ENCODE measurements at regions of chr20 and their contacts with region 1.

Region 1: DNA sequence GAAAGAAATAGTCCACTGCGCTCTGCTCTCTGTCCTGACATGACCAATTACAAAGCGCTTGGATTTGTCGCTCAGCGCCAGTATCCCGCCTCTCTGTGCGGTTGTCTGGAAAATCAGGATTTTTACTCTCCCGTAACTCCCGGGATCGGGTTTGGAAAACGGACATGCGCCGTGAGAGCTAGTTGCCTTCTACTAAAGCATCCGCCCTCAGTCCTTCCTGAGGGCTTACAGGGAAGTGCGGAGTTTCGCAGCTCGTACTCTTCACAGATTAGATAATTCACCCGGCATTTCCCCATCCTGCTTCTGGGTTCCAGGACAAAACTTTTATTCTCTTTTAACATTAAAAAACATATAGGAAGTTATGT is 427 bp upstream of the MKKS start:
- DNase-seq: peak; percentile 79
- H3K4me3 Mint-ChIP-seq: peak overlapping the region; percentile 86
- H3K27ac Mint-ChIP-seq: peak overlapping the region; percentile 91
- H3K4me1 Mint-ChIP-seq: peaks cover 69% of the 10 kb centered on the region
- H3K27me3 Mint-ChIP-seq: no peaks in the 10 kb centered on the region

Region 2: GRCh38 chr20:10271494-10272219 is 162.8 kb before region 1 on chr20:
- CTCF ChIA-PET with region 1: no interaction called
- POLR2A ChIA-PET with region 1: no interaction called
- DNase-seq: no peak
- H3K4me3 Mint-ChIP-seq: no peak overlapping the region
- H3K27ac Mint-ChIP-seq: no peak overlapping the region
- H3K4me1 Mint-ChIP-seq: no peaks in the 10 kb centered on the region
- H3K27me3 Mint-ChIP-seq: no peaks in the 10 kb centered on the region

Region 3: GRCh38 chr20:10332656-10333415 is 101.6 kb before region 1 on chr20:
- CTCF ChIA-PET with region 1: no interaction called
- POLR2A ChIA-PET with region 1: no interaction called
- DNase-seq: no peak
- H3K4me3 Mint-ChIP-seq: no peak overlapping the region
- H3K27ac Mint-ChIP-seq: no peak overlapping the region
- H3K4me1 Mint-ChIP-seq: peaks cover 3% of the 10 kb centered on the region
- H3K27me3 Mint-ChIP-seq: peaks cover 15% of the 10 kb centered on the region

Region 4: DNA sequence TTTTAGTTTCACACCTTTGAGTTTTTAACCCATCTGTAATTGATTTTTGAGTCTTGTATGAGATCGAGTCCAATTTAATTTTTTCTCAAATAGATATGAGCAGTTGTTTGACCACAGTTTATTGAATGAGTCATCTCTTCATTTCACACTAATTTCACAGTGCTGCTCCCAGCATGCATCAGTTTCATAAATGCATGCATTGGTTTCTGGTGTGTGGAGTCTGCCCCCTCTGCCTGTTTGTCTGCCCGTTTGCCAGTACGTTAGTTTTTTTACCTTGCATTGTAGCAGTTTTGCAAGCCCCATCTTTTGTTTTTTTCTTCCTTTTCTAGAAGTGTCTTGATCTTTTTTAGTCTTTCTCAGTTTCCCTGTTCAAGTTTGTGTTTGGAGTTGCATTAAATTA is 12.6 kb after region 1 on chr20:
- CTCF ChIA-PET with region 1: interaction called, 6 read pairs
- POLR2A ChIA-PET with region 1: interaction called, 33 read pairs
- DNase-seq: peak; percentile 69
- H3K4me3 Mint-ChIP-seq: peak overlapping the region; percentile 66
- H3K27ac Mint-ChIP-seq: peak overlapping the region; percentile 81
- H3K4me1 Mint-ChIP-seq: peaks cover 36% of the 10 kb centered on the region
- H3K27me3 Mint-ChIP-seq: no peaks in the 10 kb centered on the region

Region 5: DNA sequence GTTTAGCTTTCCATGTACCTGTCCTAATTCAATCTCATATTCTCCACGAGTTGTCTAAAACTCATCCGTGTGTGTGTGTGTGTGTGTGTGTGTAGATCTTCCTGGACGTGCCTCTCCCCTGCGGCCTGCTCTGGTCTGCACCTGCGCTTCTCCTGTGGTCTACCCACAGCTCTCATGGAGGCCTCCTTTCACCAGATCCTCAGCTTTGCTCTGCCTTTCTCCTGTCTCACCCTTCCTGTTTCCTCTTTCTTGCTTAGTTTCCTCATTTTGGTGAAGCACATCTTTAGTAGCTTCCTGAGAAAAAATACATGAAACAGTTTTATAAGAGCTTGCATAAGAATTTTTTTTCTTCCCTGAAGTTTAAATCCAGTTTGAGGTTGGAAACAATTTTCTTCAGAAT is 18.8 kb after region 1 on chr20:
- CTCF ChIA-PET with region 1: interaction called, 6 read pairs
- POLR2A ChIA-PET with region 1: interaction called, 33 read pairs
- DNase-seq: peak; percentile 58
- H3K4me3 Mint-ChIP-seq: peak overlapping the region; percentile 19
- H3K27ac Mint-ChIP-seq: peak overlapping the region; percentile 48
- H3K4me1 Mint-ChIP-seq: peaks cover 20% of the 10 kb centered on the region
- H3K27me3 Mint-ChIP-seq: no peaks in the 10 kb centered on the region

Region 6: DNA sequence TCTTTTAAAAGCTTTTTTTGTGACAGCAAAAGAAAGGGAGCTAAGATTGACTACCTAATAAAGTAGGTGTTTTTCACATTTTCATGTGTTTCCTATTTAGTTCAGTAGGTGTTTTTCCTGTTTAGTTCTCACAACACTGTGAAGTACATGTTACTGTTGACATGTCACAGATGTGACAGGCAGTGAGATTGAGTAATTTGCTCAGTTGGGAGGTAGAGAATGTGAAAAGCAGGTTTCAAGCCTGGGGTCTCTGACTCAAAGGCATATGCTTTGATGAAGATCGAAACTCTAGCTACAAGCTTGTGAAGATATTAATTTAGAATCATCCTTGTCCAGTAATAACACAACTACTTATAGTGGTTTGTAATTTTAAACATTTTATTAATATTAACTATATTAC is 43.8 kb after region 1 on chr20:
- CTCF ChIA-PET with region 1: no interaction called
- POLR2A ChIA-PET with region 1: no interaction called
- DNase-seq: no peak
- H3K4me3 Mint-ChIP-seq: no peak overlapping the region
- H3K27ac Mint-ChIP-seq: no peak overlapping the region
- H3K4me1 Mint-ChIP-seq: peaks cover 10% of the 10 kb centered on the region
- H3K27me3 Mint-ChIP-seq: no peaks in the 10 kb centered on the region

Region 7: GRCh38 chr20:10511509-10512251 is 77.2 kb after region 1 on chr20:
- CTCF ChIA-PET with region 1: interaction called, 4 read pairs
- POLR2A ChIA-PET with region 1: interaction called, 18 read pairs
- DNase-seq: peak; percentile 84
- H3K4me3 Mint-ChIP-seq: peak overlapping the region; percentile 5
- H3K27ac Mint-ChIP-seq: peak overlapping the region; percentile 61
- H3K4me1 Mint-ChIP-seq: peaks cover 43% of the 10 kb centered on the region
- H3K27me3 Mint-ChIP-seq: no peaks in the 10 kb centered on the region

Region 8: GRCh38 chr20:10673988-10674711 is 239.7 kb after region 1 on chr20 and contains the start of gene JAG1:
- CTCF ChIA-PET with region 1: interaction called, 3 read pairs
- POLR2A ChIA-PET with region 1: interaction called, 13 read pairs
- DNase-seq: peak; percentile 75
- H3K4me3 Mint-ChIP-seq: peak within 1 kb of the TSS; percentile 84
- H3K27ac Mint-ChIP-seq: no peak within 1 kb of the TSS
- H3K4me1 Mint-ChIP-seq: peaks cover 34% of the 10 kb centered on the region
- H3K27me3 Mint-ChIP-seq: peaks cover 73% of the 10 kb centered on the region
- total RNA-seq, gene JAG1: 0.15 to 0.30 TPM

Measured in activated CD4-positive, alpha-beta memory T cell treated with anti-CD3 and anti-CD28 coated beads, Interleukin-2, amount 10 ng/mL, durations not matched to agents 7 days and 5 days (primary cell).